ENCODE measurements at regions of chr12 and their contacts with region 1.

Region 1: GRCh38 chr12:133181238-133181959 is at the start of gene ZNF268:
- DNase-seq: peak; percentile 75 to 90 (median 86)
- ATAC-seq: peak; percentile 99
- H3K4me3 ChIP-seq: peak within 1 kb of the TSS; percentile 100
- H3K4me3 Mint-ChIP-seq: peak within 1 kb of the TSS; percentile 90 to 99 (median 95)
- H3K27ac ChIP-seq: peak within 1 kb of the TSS; percentile 84
- H3K27ac Mint-ChIP-seq: peak within 1 kb of the TSS; percentile 85 to 97 (median 92)
- H3K4me1 ChIP-seq: peaks cover 7 to 9% of the 10 kb centered on the region in 2 donors
- H3K4me1 Mint-ChIP-seq: peaks cover 16 to 34% (median 31%) of the 10 kb centered on the region in 7 donors
- H3K27me3 ChIP-seq: no peaks in the 10 kb centered on the region
- H3K27me3 Mint-ChIP-seq: no peaks in the 10 kb centered on the region
- total RNA-seq, gene ZNF268: 13.6 to 38.6 (median 18.6) TPM

Region 2: GRCh38 chr12:132638541-132639418 is 542.6 kb before region 1 on chr12:
- CTCF ChIA-PET with region 1: no interaction called
- POLR2A ChIA-PET with region 1: no interaction called
- intact Hi-C with region 1: no loop called
- DNase-seq: no peak
- ATAC-seq: no peak
- H3K4me3 ChIP-seq: no peak overlapping the region
- H3K4me3 Mint-ChIP-seq: no peak overlapping the region
- H3K27ac ChIP-seq: no peak overlapping the region
- H3K27ac Mint-ChIP-seq: no peak overlapping the region
- H3K4me1 ChIP-seq: no peaks in the 10 kb centered on the region
- H3K4me1 Mint-ChIP-seq: peaks cover 0 to 10% (median 0%) of the 10 kb centered on the region in 7 donors
- H3K27me3 ChIP-seq: no peaks in the 10 kb centered on the region
- H3K27me3 Mint-ChIP-seq: no peaks in the 10 kb centered on the region

Region 3: DNA sequence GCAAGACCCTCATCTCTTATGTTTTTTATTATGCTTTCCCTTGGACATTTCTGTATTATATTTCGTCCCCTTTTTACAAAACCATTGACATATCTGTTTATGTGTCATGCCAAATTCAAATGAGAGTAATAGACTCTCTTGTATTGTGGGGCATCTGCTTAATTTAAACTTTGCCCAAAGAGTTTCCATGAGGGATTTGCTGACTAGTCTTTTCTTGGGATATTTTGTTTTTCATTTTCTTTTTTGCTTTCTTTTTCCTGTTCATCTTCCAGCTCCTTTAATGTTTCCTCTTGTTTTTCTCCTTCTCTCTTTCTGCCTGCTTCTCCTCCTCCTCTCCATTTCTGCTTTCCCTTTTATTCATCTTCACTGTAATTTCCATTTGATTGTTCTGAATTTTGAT is 209.0 kb before region 1 on chr12:
- CTCF ChIA-PET with region 1: no interaction called
- POLR2A ChIA-PET with region 1: no interaction called
- intact Hi-C with region 1: no loop called
- DNase-seq: no peak
- ATAC-seq: no peak
- H3K4me3 ChIP-seq: no peak overlapping the region
- H3K4me3 Mint-ChIP-seq: no peak overlapping the region
- H3K27ac ChIP-seq: no peak overlapping the region
- H3K27ac Mint-ChIP-seq: no peak overlapping the region
- H3K4me1 ChIP-seq: no peaks in the 10 kb centered on the region
- H3K4me1 Mint-ChIP-seq: no peaks in the 10 kb centered on the region
- H3K27me3 ChIP-seq: no peaks in the 10 kb centered on the region
- H3K27me3 Mint-ChIP-seq: peaks cover 0 to 33% (median 13%) of the 10 kb centered on the region in 5 donors

Region 4: GRCh38 chr12:133037207-133038005 is 144.0 kb before region 1 on chr12 and contains the start of gene ZNF84:
- CTCF ChIA-PET with region 1: no interaction called
- POLR2A ChIA-PET with region 1: interaction called, 5 read pairs
- intact Hi-C with region 1: loop called (anchors 1 kb)
- DNase-seq: peak; percentile 93 to 99 (median 97)
- ATAC-seq: peak; percentile 96
- H3K4me3 ChIP-seq: peak within 1 kb of the TSS; percentile 65
- H3K4me3 Mint-ChIP-seq: peak within 1 kb of the TSS; percentile 78 to 96 (median 94)
- H3K27ac ChIP-seq: peak within 1 kb of the TSS; percentile 94
- H3K27ac Mint-ChIP-seq: peak within 1 kb of the TSS; percentile 87 to 99 (median 94)
- H3K4me1 ChIP-seq: peaks cover 0 to 4% of the 10 kb centered on the region in 2 donors
- H3K4me1 Mint-ChIP-seq: peaks cover 0 to 37% (median 13%) of the 10 kb centered on the region in 7 donors
- H3K27me3 ChIP-seq: no peaks in the 10 kb centered on the region
- H3K27me3 Mint-ChIP-seq: peaks cover 0 to 9% (median 3%) of the 10 kb centered on the region in 5 donors
- total RNA-seq, gene ZNF84: 27.4 to 52.7 (median 31.6) TPM

Region 5: DNA sequence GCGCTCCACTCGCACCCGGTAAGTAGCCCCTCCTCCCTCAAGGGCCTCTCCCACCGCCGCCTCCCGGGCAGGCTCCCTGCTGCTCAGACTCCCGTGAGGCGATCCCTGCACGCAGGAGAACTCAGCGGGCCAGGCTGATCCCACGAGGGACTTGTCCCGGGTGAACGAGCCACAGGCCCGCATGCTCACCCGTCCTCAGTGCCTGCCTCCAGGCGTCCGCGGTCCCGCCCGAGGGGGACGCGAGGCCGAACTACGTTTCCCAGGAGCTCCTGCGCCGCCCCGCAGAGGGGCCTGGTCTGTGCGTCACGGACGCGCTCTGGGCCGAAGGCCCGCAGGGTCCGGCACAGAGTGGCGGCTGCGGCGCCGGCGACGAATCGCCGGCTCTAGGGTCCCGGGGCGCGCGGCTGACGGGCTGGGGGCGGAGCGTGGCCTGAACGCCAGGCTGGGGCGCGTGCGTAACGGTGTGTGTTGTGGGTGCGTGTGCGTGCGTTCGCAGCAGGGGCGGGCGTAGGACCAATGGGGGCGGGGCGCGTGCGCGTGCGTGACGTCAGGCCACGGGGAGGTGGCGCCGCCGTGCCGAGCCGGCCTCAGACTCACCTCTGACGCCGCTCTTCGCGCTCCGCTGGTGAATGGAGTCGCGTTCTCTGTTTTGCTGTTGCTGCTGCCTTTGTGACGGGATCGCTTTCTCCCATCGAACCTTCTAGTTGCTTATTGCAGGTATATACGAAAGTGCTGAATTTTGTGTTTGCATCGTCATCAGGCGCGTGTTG is 51.2 kb before region 1 on chr12 and contains the starts of genes ZNF10 and ZNF891:
- CTCF ChIA-PET with region 1: no interaction called
- POLR2A ChIA-PET with region 1: interaction called, 7 read pairs
- intact Hi-C with region 1: loop called (anchors 1 kb)
- DNase-seq: peak; percentile 96 to 99 (median 98)
- ATAC-seq: peak; percentile 93
- H3K4me3 ChIP-seq: peak within 1 kb of the TSS; percentile 62
- H3K4me3 Mint-ChIP-seq: peak within 1 kb of the TSS; percentile 90 to 99 (median 94)
- H3K27ac ChIP-seq: peak within 1 kb of the TSS; percentile 98
- H3K27ac Mint-ChIP-seq: peak within 1 kb of the TSS; percentile 97 to 100 (median 99)
- H3K4me1 ChIP-seq: peaks cover 0 to 7% of the 10 kb centered on the region in 2 donors
- H3K4me1 Mint-ChIP-seq: peaks cover 15 to 51% (median 27%) of the 10 kb centered on the region in 7 donors
- H3K27me3 ChIP-seq: no peaks in the 10 kb centered on the region
- H3K27me3 Mint-ChIP-seq: no peaks in the 10 kb centered on the region
- total RNA-seq, gene ZNF10: 5.2 to 35.0 (median 29.2) TPM
- total RNA-seq, gene ZNF891: 2.4 to 7.9 (median 6.6) TPM